Ascending aorta (tissue), 2 donors: ENCODE measurements at regions of chr22 and their contacts with region 1.

Region 1: DNA sequence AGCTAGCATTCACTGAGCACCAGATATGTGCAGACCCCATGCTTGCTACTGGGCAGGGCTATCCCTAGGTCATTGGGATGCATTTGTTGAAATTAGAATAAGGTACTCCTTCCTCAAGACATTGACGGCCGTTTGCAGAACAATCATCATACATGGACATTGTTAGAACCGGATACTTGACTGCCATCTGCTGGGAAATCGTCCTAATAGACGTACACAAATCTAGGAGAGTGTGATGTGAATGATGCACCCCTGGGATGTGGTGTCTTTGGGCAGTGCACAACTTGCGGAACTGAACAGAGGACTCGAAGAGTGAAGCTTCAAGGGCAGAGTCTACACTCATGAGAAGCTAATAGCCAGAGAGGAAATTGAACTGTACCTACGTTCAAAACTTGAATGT is 35.9 kb downstream of the MYO18B start:
- DNase-seq: no peak
- H3K4me3 ChIP-seq: no peak overlapping the region
- H3K27ac ChIP-seq: no peak overlapping the region
- H3K4me1 ChIP-seq: no peaks in the 10 kb centered on the region
- H3K27me3 ChIP-seq: no peaks in the 10 kb centered on the region
- CTCF ChIP-seq: no peak

Region 2: GRCh38 chr22:25447686-25448434 is 330.0 kb before region 1 on chr22:
- intact Hi-C with region 1: loop called (anchors 5 kb)
- DNase-seq: peak; percentile 41 to 92
- H3K4me3 ChIP-seq: peak overlapping the region; percentile 76 to 95
- H3K27ac ChIP-seq: peak overlapping the region; percentile 80 to 81
- H3K4me1 ChIP-seq: peaks cover 5 to 17% of the 10 kb centered on the region in 2 donors
- H3K27me3 ChIP-seq: no peaks in the 10 kb centered on the region
- CTCF ChIP-seq: peak; percentile 87 to 90 (median 89)

Region 3: DNA sequence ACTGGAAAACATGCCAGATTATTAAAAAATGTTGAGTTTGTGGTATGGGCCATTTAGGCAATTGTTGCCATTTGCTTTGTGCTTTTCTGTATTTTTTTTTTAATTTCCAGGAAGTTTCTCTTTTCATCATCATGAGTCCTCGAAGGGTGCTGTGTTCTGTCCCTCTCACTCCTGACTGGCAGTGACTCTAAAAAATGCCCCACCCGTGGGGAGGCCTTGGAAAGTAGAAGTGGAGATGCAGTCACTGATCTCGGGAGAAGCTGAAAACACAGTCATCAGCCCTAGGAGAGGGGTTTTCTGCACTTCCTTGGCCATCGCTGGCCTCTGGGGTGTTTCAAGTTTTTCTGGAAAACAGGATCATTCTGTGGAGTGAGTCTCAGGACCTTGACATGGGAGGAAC is 311.9 kb before region 1 on chr22:
- intact Hi-C with region 1: loop called (anchors 1 kb)
- DNase-seq: no peak
- H3K4me3 ChIP-seq: no peak overlapping the region
- H3K27ac ChIP-seq: no peak overlapping the region
- H3K4me1 ChIP-seq: no peaks in the 10 kb centered on the region
- H3K27me3 ChIP-seq: no peaks in the 10 kb centered on the region
- CTCF ChIP-seq: no peak

Region 4: GRCh38 chr22:25564320-25564978 is 213.4 kb before region 1 on chr22 and contains the start of gene GRK3:
- intact Hi-C with region 1: loop called (anchors 5 kb)
- DNase-seq: peak in 1 of 2 donors; percentile 81
- H3K4me3 ChIP-seq: peak within 1 kb of the TSS; percentile 82 to 90
- H3K27ac ChIP-seq: peak within 1 kb of the TSS; percentile 57 to 59
- H3K4me1 ChIP-seq: peaks cover 0 to 13% of the 10 kb centered on the region in 2 donors
- H3K27me3 ChIP-seq: no peaks in the 10 kb centered on the region
- CTCF ChIP-seq: no peak
- total RNA-seq, gene GRK3: 74.9 TPM

Region 5: DNA sequence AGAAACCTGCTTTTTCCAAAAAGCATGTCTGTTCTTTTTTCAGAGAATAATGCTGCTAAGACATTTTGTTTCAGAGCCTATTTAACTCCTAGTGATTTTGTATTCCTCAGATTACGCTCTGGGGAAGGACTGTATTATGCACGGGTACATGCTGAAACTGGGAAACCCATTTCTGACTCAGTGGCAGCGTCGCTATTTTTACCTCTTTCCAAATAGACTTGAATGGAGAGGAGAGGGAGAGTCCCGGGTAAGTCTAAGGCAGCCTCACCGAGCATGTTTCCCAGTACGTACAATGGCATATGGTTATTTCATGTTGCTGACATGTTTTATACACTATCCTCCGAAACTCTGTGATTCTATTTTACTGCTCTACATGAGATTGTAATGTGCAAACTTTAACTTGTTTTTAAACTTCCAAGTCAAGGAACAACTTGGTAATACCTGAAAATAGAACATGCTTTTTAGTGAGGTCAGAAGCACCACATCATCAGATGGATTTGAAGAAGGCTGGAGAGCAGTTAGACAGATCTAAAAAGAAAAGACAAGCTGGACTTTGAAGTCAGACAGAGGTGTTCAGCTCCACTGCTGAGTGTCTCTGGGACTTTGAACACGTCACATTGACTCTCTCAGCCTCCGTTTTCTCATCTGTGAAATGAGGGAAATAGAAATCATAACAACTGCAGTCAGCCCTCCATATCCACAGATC is 59.6 kb before region 1 on chr22:
- intact Hi-C with region 1: loop called (anchors 5 kb)
- DNase-seq: no peak
- H3K4me3 ChIP-seq: no peak overlapping the region
- H3K27ac ChIP-seq: peak overlapping the region in 1 of 2 donors; percentile 56
- H3K4me1 ChIP-seq: peaks cover 0 to 3% of the 10 kb centered on the region in 2 donors
- H3K27me3 ChIP-seq: no peaks in the 10 kb centered on the region
- CTCF ChIP-seq: no peak